Spleen (tissue), 13 donors: ENCODE measurements at regions of chr9 and their contacts with region 1.

Region 1: GRCh38 chr9:88388172-88388885 is at the start of gene SPIN1:
- DNase-seq: peak; percentile 96
- H3K4me3 ChIP-seq: peak within 1 kb of the TSS; percentile 69 to 97 (median 86)
- H3K27ac ChIP-seq: peak within 1 kb of the TSS; percentile 78 to 95 (median 90)
- H3K4me1 ChIP-seq: peaks cover 0 to 55% (median 35%) of the 10 kb centered on the region in 6 donors
- H3K27me3 ChIP-seq: no peaks in the 10 kb centered on the region
- CTCF ChIP-seq: peak in 6 of 11 experiments; percentile 54 to 72 (median 60)
- POLR2A ChIP-seq: no peak
- total RNA-seq, gene SPIN1: 39.6 to 55.1 (median 49.8) TPM

Region 2: DNA sequence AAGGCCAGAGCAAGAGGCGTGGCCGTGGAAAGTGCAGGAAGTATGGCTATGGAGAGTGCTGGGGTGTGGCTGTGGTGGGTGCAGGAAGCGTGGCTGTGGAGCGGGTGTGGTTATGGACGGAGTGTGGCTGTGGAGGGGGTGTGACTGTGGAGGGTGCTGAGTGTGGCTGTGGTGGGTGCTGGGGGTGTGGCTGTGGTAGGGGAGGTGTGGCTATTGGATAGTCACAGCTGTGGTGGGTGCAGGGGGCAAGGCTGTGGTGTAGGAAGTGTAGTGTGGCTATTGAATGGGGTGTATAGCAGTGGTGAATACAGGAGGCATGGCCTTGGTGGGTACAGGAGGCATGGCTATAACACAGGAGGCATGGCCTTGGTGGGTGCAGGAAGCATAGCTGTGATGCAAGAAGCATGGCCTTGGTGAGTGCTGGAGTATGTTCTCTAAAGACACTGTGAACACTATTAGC is 209.2 kb before region 1 on chr9:
- intact Hi-C with region 1: loop called (anchors 5 kb)
- DNase-seq: peak; percentile 83
- H3K4me3 ChIP-seq: peak overlapping the region in 1 of 8 donors; percentile 9
- H3K27ac ChIP-seq: peak overlapping the region in 5 of 8 donors; percentile 21 to 69 (median 64)
- H3K4me1 ChIP-seq: peaks cover 0 to 7% (median 0%) of the 10 kb centered on the region in 6 donors
- H3K27me3 ChIP-seq: no peaks in the 10 kb centered on the region
- CTCF ChIP-seq: no peak
- POLR2A ChIP-seq: no peak

Region 3: DNA sequence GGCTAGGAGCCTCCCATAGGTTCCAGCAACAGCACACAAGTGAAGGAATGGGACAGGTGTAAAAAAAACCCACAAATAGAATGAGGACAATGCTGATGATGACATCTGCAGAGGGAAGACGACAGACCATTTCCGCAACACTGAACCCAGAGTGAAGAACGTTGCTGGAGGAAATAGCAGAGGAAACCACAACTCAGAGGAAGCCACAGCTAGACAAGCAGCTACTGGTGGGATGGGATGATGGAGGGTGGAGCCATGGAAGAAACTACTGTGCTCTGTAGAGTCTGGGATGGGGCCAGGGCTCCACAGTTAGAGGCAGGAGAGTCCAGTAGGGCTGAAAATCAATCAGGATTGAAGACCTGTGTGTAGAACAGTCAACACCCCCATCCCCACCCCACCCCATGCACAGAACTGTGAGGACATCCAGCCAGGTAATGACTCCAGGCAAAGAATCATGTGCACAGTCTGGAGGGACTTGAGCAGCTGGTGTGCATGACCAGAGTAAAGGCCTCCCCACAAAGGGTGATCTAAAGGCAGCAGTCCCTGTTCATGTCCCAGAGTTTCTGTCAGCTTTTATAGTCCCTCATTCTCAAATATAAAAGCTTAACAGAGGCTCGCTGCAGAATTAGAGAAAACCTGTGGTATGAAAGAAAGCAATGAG is 65.3 kb before region 1 on chr9:
- intact Hi-C with region 1: no loop called
- DNase-seq: no peak
- H3K4me3 ChIP-seq: no peak overlapping the region
- H3K27ac ChIP-seq: peak overlapping the region in 3 of 8 donors; percentile 21 to 53 (median 38)
- H3K4me1 ChIP-seq: peaks cover 0 to 29% (median 13%) of the 10 kb centered on the region in 6 donors
- H3K27me3 ChIP-seq: no peaks in the 10 kb centered on the region
- CTCF ChIP-seq: no peak
- POLR2A ChIP-seq: no peak

Region 4: GRCh38 chr9:88460587-88461332 is 72.4 kb after region 1 on chr9:
- intact Hi-C with region 1: no loop called
- DNase-seq: no peak
- H3K4me3 ChIP-seq: no peak overlapping the region
- H3K27ac ChIP-seq: no peak overlapping the region
- H3K4me1 ChIP-seq: no peaks in the 10 kb centered on the region
- H3K27me3 ChIP-seq: no peaks in the 10 kb centered on the region
- CTCF ChIP-seq: no peak
- POLR2A ChIP-seq: no peak

Region 5: DNA sequence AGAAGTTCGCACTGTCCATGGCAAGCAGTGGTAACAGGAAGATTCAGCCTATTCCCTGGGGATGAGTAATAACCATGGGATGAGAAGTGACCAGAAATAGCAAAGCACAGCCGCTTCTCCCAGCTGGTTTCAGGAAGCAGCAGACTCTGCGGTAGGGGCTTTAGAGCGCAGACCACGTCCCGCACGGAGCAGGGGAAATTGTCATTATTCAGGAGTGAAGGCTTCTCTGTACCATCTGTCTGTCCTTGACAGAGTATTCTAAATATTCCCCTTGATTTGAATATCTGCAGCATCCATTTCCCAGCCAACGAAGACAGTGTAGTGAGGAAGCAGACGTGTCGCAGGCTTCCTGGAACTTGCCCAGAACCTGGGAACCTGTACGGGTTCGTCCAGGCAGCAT is 306.3 kb after region 1 on chr9:
- intact Hi-C with region 1: no loop called
- DNase-seq: no peak
- H3K4me3 ChIP-seq: no peak overlapping the region
- H3K27ac ChIP-seq: no peak overlapping the region
- H3K4me1 ChIP-seq: peaks cover 0 to 9% (median 0%) of the 10 kb centered on the region in 6 donors
- H3K27me3 ChIP-seq: peaks cover 0 to 19% (median 0%) of the 10 kb centered on the region in 7 donors
- CTCF ChIP-seq: no peak
- POLR2A ChIP-seq: no peak